CD4-positive, alpha-beta memory T cell (primary cell): ENCODE measurements at regions of chr10 and their contacts with region 1.

Region 1: DNA sequence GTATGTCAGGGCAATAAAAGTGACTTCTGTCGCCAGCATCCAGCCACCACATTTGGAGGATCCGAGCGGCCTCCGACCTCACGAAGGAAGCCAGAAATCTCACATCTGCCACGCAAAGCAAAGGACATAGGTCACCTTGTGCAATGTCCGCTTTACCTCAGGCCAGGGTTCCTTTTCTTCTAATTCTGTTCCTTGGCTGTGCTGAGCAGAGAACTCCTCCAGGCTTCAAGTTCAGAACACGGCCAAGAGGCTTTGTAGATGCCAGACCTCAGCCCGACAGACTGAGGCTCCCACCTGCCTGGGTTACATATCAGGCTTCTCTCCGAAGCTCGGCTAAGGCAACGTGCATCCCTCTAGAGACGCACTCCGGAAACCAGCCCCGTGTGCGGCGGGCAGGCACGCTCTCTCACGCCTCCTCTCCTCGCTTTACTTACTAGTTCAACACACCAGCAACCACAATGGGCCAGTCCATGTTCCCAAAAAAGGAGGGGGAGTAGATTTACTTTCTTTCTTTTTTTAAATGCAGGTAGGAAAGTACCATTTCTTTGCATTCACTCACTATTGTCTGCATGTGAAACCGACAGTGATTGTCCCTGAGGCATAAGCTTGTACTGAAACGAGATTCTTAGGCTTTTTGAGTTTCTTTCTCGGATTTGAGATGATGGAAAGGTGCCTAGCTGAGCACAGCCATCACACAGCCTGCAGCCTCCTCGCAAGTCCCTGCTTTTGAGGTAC is 122.4 kb upstream of the AFAP1L2 start:
- DNase-seq: peak; percentile 90 to 96 (median 94)
- H3K4me3 ChIP-seq: peak overlapping the region; percentile 78 to 82
- H3K4me3 Mint-ChIP-seq: peak overlapping the region; percentile 90 to 99 (median 96)
- H3K27ac ChIP-seq: peak overlapping the region; percentile 80
- H3K27ac Mint-ChIP-seq: peak overlapping the region; percentile 94 to 100 (median 99)
- H3K4me1 ChIP-seq: peaks cover 55% of the 10 kb centered on the region
- H3K4me1 Mint-ChIP-seq: peaks cover 32 to 68% (median 53%) of the 10 kb centered on the region in 4 donors
- H3K27me3 ChIP-seq: no peaks in the 10 kb centered on the region
- H3K27me3 Mint-ChIP-seq: no peaks in the 10 kb centered on the region

Region 2: GRCh38 chr10:113960617-113961181 is 566.0 kb before region 1 on chr10:
- CTCF ChIA-PET with region 1: no interaction called
- POLR2A ChIA-PET with region 1: interaction called, 3 read pairs
- intact Hi-C with region 1: loop called (anchors 1 kb)
- DNase-seq: peak; percentile 65 to 75 (median 72)
- H3K4me3 ChIP-seq: peak overlapping the region; percentile 14 to 57
- H3K4me3 Mint-ChIP-seq: peak overlapping the region; percentile 61 to 86 (median 76)
- H3K27ac ChIP-seq: peak overlapping the region; percentile 46
- H3K27ac Mint-ChIP-seq: peak overlapping the region; percentile 89 to 98 (median 95)
- H3K4me1 ChIP-seq: peaks cover 63% of the 10 kb centered on the region
- H3K4me1 Mint-ChIP-seq: peaks cover 36 to 58% (median 52%) of the 10 kb centered on the region in 4 donors
- H3K27me3 ChIP-seq: no peaks in the 10 kb centered on the region
- H3K27me3 Mint-ChIP-seq: peaks cover 0 to 2% of the 10 kb centered on the region in 2 donors

Region 3: DNA sequence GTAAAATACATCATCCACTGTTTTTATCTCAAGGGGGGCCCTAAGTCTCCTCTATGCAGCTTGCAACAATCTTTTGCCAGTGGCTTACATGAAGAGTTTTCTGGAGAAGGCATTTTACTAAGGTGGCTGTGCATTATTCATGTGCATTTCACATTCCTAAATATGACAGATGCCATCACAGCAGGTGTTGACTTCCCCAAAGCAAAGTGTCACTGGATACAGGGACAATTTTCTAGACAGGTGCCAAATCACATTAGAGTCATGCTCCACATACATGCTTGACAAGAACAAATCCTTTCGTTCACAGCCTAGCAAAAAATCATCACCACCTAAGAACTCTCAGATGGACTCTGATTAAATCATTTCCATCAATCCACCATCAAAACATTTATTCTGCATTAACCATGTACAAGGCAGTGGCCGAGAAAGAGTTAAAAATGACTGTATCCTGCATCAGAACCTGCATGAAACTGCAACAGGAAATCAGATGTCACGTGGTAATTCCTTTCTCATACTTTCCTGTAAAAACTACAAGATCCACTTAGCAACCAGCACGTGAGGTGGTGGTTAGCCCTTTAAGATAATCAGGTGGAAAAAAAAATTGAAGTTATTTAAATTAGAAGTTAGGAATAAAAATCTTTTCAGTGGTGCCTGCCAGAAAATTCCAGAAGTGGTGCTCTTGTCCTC is 34.2 kb before region 1 on chr10:
- CTCF ChIA-PET with region 1: interaction called, 7 read pairs
- POLR2A ChIA-PET with region 1: interaction called, 110 read pairs
- intact Hi-C with region 1: no loop called
- DNase-seq: peak; percentile 20 to 54 (median 39)
- H3K4me3 ChIP-seq: no peak overlapping the region
- H3K4me3 Mint-ChIP-seq: peak overlapping the region in 7 of 8 donors; percentile 10 to 68 (median 59)
- H3K27ac ChIP-seq: no peak overlapping the region
- H3K27ac Mint-ChIP-seq: peak overlapping the region; percentile 15 to 84 (median 80)
- H3K4me1 ChIP-seq: peaks cover 53% of the 10 kb centered on the region
- H3K4me1 Mint-ChIP-seq: peaks cover 40 to 62% (median 54%) of the 10 kb centered on the region in 4 donors
- H3K27me3 ChIP-seq: no peaks in the 10 kb centered on the region
- H3K27me3 Mint-ChIP-seq: no peaks in the 10 kb centered on the region

Region 4: DNA sequence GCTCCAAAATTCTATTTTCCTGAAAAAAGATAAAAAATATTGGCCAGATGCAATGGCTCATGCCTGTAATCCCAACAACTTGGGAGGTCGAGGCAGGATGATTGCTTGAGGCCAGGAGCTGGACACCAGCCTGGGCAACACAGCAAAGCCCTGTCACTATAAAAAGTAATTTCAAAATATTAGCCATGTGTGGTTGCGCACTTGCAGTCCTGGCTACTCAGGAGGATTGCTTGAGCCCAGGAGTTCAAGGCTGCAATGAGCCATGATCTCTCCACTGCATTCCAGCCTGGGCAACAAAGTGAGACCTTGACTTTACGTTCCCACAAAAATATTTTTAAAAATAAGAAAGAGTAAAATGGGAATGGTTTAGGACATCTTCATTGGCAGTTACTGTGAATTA is 18.3 kb before region 1 on chr10:
- CTCF ChIA-PET with region 1: interaction called, 9 read pairs
- POLR2A ChIA-PET with region 1: interaction called, 110 read pairs
- intact Hi-C with region 1: no loop called
- DNase-seq: no peak
- H3K4me3 ChIP-seq: no peak overlapping the region
- H3K4me3 Mint-ChIP-seq: no peak overlapping the region
- H3K27ac ChIP-seq: no peak overlapping the region
- H3K27ac Mint-ChIP-seq: peak overlapping the region in 2 of 7 donors; percentile 1 to 48
- H3K4me1 ChIP-seq: peaks cover 77% of the 10 kb centered on the region
- H3K4me1 Mint-ChIP-seq: peaks cover 64 to 90% (median 76%) of the 10 kb centered on the region in 4 donors
- H3K27me3 ChIP-seq: no peaks in the 10 kb centered on the region
- H3K27me3 Mint-ChIP-seq: no peaks in the 10 kb centered on the region

Region 5: DNA sequence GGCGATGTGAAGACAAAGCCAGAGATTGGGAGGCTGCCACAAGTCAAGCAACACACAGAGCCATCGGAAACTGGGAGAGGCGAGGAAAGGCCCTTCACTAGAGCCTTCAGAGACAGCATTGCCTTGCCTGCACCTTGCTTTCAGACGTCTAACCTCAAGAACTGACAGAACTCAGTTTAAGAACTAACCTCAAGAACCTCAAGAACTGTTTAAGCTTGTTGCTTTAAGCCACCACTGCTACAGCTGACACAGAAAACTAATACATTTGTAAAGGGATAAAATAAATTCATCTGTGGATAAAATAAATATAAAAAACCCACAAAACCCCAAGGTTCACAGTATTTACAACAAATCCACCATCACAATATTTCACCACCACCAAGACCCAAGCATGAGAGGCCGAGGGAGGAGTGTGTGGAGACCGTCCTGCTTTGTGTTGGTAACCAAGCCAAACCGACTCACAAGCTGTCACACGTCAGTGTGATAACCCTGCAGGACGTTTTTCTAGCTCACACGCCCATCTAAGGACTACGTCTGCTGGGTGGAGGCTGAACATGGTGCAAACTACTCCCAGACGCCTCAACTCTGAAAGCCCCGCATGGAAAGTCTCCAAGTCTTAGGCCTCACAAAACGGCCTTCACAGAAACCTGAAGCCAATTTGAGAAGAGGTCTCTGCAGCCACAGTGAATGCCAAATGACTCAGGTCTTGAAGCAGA is 14.6 kb after region 1 on chr10:
- CTCF ChIA-PET with region 1: interaction called, 175 read pairs
- POLR2A ChIA-PET with region 1: interaction called, 459 read pairs
- intact Hi-C with region 1: loop called (anchors 1 kb)
- DNase-seq: peak; percentile 86 to 92 (median 90)
- H3K4me3 ChIP-seq: no peak overlapping the region
- H3K4me3 Mint-ChIP-seq: peak overlapping the region; percentile 57 to 87 (median 76)
- H3K27ac ChIP-seq: peak overlapping the region; percentile 74
- H3K27ac Mint-ChIP-seq: peak overlapping the region; percentile 89 to 100 (median 98)
- H3K4me1 ChIP-seq: peaks cover 97% of the 10 kb centered on the region
- H3K4me1 Mint-ChIP-seq: peaks cover 67 to 92% (median 86%) of the 10 kb centered on the region in 4 donors
- H3K27me3 ChIP-seq: no peaks in the 10 kb centered on the region
- H3K27me3 Mint-ChIP-seq: no peaks in the 10 kb centered on the region

Region 6: GRCh38 chr10:114937962-114938855 is 411.5 kb after region 1 on chr10 and contains the start of gene TRUB1:
- CTCF ChIA-PET with region 1: no interaction called
- POLR2A ChIA-PET with region 1: interaction called, 3 read pairs
- intact Hi-C with region 1: loop called (anchors 2 kb)
- DNase-seq: peak; percentile 85 to 93 (median 87)
- H3K4me3 ChIP-seq: peak within 1 kb of the TSS; percentile 67 to 73
- H3K4me3 Mint-ChIP-seq: peak within 1 kb of the TSS; percentile 94 to 97 (median 96)
- H3K27ac ChIP-seq: peak within 1 kb of the TSS; percentile 75
- H3K27ac Mint-ChIP-seq: peak within 1 kb of the TSS; percentile 93 to 98 (median 97)
- H3K4me1 ChIP-seq: peaks cover 15% of the 10 kb centered on the region
- H3K4me1 Mint-ChIP-seq: peaks cover 21 to 41% (median 31%) of the 10 kb centered on the region in 4 donors
- H3K27me3 ChIP-seq: no peaks in the 10 kb centered on the region
- H3K27me3 Mint-ChIP-seq: no peaks in the 10 kb centered on the region
- total RNA-seq, gene TRUB1: 11.3 to 14.5 TPM